Activated CD4-positive, alpha-beta memory T cell treated with anti-CD3 and anti-CD28 coated beads for 36 hours (primary cell): ENCODE measurements at regions of chr9 and their contacts with region 1.

Region 1: GRCh38 chr9:122099271-122099869 is 6.3 kb upstream of the TTLL11 start:
- DNase-seq: peak; percentile 83
- H3K4me3 Mint-ChIP-seq: peak overlapping the region; percentile 58
- H3K27ac Mint-ChIP-seq: no peak overlapping the region
- H3K4me1 Mint-ChIP-seq: peaks cover 12% of the 10 kb centered on the region
- H3K27me3 Mint-ChIP-seq: peaks cover 8% of the 10 kb centered on the region

Region 2: DNA sequence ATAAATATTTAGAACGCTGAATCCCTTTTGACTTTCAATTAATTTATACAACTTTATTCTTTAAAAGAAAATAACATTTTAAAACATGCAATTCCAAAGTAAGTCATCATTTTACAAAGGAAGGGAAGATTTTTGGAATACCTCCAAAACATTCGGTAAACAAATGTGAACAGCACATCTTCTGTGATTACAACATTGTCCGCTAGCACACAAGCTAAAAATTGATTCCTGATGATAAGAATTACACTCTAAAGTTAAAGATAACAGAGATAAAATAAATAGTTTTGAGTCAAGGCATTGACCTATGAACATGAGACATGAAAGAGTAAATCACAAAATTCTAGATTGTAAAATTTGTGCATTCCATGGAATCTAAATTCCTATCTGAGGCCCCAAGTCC is 1116.5 kb before region 1 on chr9:
- CTCF ChIA-PET with region 1: no interaction called
- POLR2A ChIA-PET with region 1: no interaction called
- intact Hi-C with region 1: no loop called
- DNase-seq: no peak
- H3K4me3 Mint-ChIP-seq: no peak overlapping the region
- H3K27ac Mint-ChIP-seq: no peak overlapping the region
- H3K4me1 Mint-ChIP-seq: no peaks in the 10 kb centered on the region
- H3K27me3 Mint-ChIP-seq: no peaks in the 10 kb centered on the region

Region 3: GRCh38 chr9:122087406-122088200 is 11.8 kb before region 1 on chr9:
- CTCF ChIA-PET with region 1: interaction called, 24 read pairs
- POLR2A ChIA-PET with region 1: no interaction called
- intact Hi-C with region 1: no loop called
- DNase-seq: no peak
- H3K4me3 Mint-ChIP-seq: no peak overlapping the region
- H3K27ac Mint-ChIP-seq: no peak overlapping the region
- H3K4me1 Mint-ChIP-seq: peaks cover 20% of the 10 kb centered on the region
- H3K27me3 Mint-ChIP-seq: no peaks in the 10 kb centered on the region

Region 4: DNA sequence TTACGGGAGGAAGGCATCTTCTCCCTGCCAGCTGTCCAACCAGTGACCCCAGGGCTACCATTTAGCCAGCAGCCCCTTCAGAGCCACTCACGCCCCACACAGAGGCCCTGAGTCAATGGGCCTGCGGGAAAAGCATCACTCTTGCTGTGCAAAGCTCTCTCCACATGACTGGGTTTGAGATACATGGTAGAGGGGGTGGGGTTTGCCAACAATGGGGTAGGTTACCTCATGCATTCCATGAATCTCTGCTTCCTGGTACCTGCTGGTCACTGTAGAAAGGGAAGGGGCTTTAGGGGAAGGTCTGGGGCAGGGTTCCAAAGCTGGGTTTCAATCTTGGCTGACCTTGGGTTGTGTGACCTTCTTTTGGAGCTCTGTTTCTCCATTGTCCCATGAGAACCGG is 16.7 kb after region 1 on chr9:
- CTCF ChIA-PET with region 1: interaction called, 365 read pairs
- POLR2A ChIA-PET with region 1: no interaction called
- intact Hi-C with region 1: no loop called
- DNase-seq: no peak
- H3K4me3 Mint-ChIP-seq: no peak overlapping the region
- H3K27ac Mint-ChIP-seq: no peak overlapping the region
- H3K4me1 Mint-ChIP-seq: no peaks in the 10 kb centered on the region
- H3K27me3 Mint-ChIP-seq: no peaks in the 10 kb centered on the region

Region 5: DNA sequence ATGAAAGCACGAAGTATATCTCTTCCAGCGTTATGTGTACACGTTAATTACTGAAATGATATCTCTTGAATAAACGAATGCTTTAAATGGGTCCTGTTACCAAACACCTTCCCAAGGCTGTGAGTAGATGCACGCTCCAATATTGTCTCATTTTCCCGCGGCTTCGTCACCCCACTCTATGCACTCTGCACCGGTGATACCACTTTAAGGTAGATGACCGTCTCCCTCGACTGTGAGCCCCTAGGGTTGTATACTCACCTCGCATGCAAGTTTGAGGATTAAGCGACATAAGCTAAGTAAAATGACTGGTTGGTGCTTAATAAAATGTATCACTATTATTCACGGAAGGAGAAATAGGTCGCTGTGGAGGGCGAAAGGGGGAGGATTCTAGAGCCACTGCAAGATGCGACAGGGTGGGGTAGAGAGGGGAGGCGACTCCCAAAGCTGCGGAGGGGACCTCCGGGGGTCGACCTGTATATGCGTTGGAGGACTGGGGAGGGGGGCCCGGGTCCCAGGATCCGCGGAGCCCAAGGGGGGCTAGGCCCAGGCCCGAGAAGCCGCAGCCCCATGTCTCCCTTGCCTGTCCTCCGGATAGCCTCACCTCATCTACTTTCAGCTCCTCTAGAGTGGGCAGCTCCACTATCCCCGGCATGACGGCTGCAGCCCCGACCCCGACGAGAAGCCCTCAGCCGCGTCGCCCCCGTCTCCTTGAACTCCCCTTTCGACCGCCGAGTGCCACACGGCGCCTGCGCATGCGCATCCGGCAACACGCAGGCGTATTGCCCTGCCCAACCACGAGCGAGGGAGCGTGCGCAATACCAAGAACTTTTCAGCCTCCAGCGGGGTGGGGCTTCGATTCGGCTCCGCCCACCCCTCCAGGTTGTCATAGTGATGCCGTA is 59.9 kb after region 1 on chr9 and contains the starts of genes MORN5 and NDUFA8:
- CTCF ChIA-PET with region 1: interaction called, 12 read pairs
- POLR2A ChIA-PET with region 1: no interaction called
- intact Hi-C with region 1: no loop called
- DNase-seq: peak; percentile 96
- H3K4me3 Mint-ChIP-seq: peak within 1 kb of the TSS; percentile 99
- H3K27ac Mint-ChIP-seq: peak within 1 kb of the TSS; percentile 93
- H3K4me1 Mint-ChIP-seq: peaks cover 38% of the 10 kb centered on the region
- H3K27me3 Mint-ChIP-seq: peaks cover 17% of the 10 kb centered on the region
- total RNA-seq, gene MORN5: not detected
- total RNA-seq, gene NDUFA8: 48.3 to 53.3 TPM

Region 6: GRCh38 chr9:122350638-122351355 is 251.4 kb after region 1 on chr9:
- CTCF ChIA-PET with region 1: interaction called, 117 read pairs
- POLR2A ChIA-PET with region 1: no interaction called
- intact Hi-C with region 1: loop called (anchors 1 kb)
- DNase-seq: peak; percentile 85
- H3K4me3 Mint-ChIP-seq: no peak overlapping the region
- H3K27ac Mint-ChIP-seq: no peak overlapping the region
- H3K4me1 Mint-ChIP-seq: peaks cover 4% of the 10 kb centered on the region
- H3K27me3 Mint-ChIP-seq: peaks cover 32% of the 10 kb centered on the region

Region 7: DNA sequence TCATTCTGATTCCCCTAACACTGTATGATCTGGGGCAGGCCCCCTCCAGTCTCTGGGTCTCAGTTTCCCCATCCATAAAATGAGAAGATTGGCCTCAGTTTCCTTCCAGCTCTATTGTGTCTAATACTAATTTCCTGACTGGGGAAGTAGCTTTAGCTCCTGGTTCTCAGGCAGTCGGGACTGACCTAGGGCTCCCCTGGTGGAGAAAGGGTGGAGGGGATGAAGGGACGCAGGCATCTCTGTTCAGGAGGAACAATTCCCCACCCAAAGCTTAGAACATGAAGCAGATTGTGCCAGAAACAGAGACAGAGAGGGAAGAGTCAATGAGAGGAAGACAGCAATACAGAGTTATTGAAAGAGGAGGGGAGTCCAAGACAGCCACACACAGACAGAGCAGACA is 257.3 kb after region 1 on chr9:
- CTCF ChIA-PET with region 1: interaction called, 117 read pairs
- POLR2A ChIA-PET with region 1: no interaction called
- intact Hi-C with region 1: no loop called
- DNase-seq: no peak
- H3K4me3 Mint-ChIP-seq: no peak overlapping the region
- H3K27ac Mint-ChIP-seq: no peak overlapping the region
- H3K4me1 Mint-ChIP-seq: no peaks in the 10 kb centered on the region
- H3K27me3 Mint-ChIP-seq: peaks cover 2% of the 10 kb centered on the region